Panc1 (cell line): ENCODE measurements at regions of chr12 and their contacts with region 1.

Region 1: DNA sequence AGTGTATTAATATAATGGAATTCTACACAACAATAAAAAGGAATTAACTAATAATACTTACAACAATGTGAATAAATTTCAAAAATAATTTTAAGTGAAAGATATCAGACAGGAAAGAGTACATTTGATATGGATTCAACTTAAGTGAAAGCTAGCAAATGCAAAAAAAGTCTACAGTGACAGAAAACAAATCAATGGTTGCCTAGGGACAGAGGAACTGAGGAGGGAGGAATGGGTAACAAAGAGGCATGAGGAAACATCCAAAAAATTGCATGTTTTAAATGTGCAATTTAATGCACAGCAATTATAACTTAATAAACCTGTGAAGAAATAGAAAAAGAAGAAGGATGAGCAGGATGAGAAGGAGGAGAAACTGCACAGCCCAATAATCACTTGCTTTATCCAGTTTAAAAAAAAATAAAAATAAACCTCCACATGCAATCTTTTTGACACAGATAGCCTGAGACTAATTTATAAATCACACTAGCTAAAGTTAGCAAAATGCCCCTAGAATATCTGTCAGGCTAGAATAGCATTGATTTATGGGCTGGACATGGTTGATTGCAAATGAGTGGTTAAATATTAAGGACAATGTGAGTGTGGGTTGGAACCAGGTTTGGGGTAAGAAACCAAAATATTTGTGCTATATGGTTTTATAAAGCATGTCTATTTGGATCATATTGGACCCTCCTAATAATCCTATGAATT is 1089.1 kb downstream of the TRHDE start:
- DNase-seq: no peak
- ATAC-seq: no peak
- H3K4me3 ChIP-seq: no peak overlapping the region
- H3K27ac ChIP-seq: no peak overlapping the region
- H3K4me1 ChIP-seq: no peaks in the 10 kb centered on the region
- H3K27me3 ChIP-seq: no peaks in the 10 kb centered on the region
- CTCF ChIP-seq: no peak

Region 2: DNA sequence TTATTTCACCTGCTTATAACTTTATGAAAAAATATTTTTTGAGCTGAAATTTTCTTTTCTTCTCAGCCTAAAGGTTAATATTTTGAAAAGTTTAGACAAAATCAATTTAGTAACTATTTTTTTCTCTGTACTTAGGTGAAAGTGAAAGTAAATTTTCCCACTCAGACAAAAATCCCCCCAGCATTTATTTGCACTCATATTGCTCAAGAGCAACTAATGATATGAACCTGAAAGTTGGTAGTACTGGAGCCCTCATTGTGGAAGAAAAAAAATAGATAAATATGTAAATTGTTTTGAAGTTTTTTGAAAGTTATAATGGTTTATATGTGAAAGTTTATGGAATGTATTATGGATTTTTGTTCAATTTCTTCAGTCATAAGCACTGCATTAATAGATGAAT is 170.4 kb after region 1 on chr12:
- CTCF ChIA-PET with region 1: interaction called, 16 read pairs
- POLR2A ChIA-PET with region 1: no interaction called
- in situ Hi-C with region 1: no loop called
- intact Hi-C with region 1: no loop called
- DNase-seq: no peak
- ATAC-seq: no peak
- H3K4me3 ChIP-seq: no peak overlapping the region
- H3K27ac ChIP-seq: no peak overlapping the region
- H3K4me1 ChIP-seq: no peaks in the 10 kb centered on the region
- H3K27me3 ChIP-seq: no peaks in the 10 kb centered on the region
- CTCF ChIP-seq: no peak